ENCODE measurements at regions of chr2 and their contacts with region 1.

Region 1: DNA sequence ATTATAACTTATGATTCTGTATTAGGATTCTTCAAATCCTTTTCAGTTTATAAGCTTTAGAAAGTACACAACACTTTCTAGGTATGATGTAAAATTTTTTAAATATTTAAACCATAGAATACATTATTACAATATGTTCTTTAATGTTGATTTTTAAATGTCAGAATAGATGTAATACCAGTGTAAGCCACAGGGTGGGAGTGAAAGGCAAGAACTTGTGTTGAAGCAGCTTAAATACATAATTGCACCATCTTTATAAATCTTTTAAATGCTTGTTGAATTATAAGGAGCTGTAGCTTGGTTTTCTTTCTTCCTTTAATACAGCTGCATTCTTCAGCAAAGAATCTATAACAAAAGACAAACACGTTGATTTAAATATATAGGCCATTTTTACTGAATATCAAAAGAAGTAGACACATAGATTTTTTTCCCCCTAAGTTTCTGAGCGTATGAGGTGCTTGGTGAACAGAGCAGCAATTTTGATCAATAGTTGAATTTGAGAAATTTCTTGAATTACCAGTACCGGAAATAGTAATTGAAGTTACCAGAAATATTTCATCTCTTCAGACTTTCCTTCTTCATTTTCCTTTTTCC is 63.0 kb downstream of the TANK start:
- DNase-seq: no peak
- ATAC-seq: no peak

Region 2: GRCh38 chr2:161257123-161257952 is 34.1 kb after region 1 on chr2:
- intact Hi-C with region 1: no loop called
- DNase-seq: no peak
- ATAC-seq: no peak

Region 3: DNA sequence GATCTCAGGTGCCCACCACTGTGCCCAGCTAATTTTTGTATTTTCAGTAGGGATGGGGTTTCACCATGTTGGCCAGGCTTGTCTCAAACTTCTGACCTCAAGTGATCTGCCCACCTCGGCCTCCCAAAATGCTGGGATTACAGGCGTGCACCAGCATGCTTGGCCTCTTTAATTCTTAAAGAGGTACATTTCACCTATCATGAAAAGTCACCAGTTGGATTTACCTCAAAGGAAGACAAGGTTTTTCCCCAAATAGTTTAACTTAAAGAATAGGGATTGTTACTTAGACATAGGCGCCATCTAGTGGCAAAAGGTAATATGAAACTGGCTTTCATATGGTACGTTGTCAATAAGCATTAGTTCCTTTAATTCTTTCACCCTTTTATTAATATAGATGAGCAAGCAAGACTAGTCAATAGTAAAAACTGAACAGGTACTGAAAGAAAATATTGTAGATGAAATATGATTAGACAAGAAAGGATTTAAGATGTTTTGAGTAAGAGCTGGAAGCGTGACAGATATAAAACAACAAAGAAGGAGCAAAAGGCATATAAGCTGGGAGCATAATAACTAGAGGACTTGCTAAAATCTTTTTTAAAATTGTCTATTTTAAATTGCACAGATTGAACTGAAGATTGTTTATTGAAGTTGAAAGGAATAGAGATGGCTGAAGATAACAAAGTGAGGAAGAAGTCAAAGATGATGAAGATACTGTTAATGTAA is 50.0 kb after region 1 on chr2:
- intact Hi-C with region 1: loop called (anchors 5 to 10 kb)
- DNase-seq: no peak
- ATAC-seq: no peak

Region 4: DNA sequence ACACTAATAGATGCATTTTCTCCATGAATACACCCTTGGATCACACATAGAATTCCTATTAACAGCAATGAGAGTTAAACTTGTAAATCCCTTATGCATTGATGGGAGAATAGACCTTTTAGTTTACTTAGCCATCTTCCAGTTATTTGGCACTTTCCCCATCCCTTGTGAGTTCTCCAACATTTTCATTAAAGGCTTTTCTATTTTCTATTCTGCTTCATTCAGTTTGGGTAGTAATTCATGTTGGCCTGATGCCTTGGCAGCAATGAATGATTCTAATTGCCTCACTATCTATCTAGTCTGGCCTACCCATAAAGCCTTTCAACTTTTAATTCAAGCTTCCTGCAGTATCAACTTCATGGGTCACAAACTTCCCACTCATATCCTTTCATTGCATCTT is 225.2 kb after region 1 on chr2:
- intact Hi-C with region 1: no loop called
- DNase-seq: no peak
- ATAC-seq: no peak